HEK293 (cell line): ENCODE measurements at regions of chr10 and their contacts with region 1.

Region 1: DNA sequence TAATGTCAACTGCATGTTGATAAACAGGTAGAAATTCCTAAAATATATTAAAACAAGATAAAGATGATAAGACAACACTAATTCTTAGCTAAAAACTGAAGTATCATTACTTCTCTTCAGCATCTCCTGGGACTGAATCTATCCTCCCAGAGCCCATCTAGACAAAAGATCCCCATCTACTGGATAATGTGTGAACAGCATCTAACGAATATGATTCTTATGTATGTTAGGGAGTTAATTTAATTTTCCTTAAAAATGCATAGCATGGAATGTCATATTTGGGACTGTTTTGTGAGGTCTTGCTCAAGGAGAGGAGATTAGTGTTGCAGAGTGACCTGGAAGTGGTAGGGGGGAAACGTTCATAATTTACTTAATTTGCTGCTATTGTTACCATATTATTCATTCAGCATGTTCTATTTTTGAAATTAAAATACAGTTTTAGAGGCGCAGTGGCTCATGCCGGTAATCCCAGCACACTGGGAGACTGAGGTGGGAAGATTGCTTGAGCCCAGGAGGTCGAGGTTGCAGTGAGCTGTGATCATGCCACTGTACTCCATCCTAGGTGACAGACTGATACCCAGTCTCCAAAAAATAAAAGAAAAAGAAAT is 305.1 kb upstream of the CSTF2T start:
- H3K4me3 ChIP-seq: no peak overlapping the region
- H3K27ac ChIP-seq: no peak overlapping the region
- H3K4me1 ChIP-seq: no peaks in the 10 kb centered on the region
- CTCF ChIP-seq: 0 out of 2 replicates have a peak, but pooled peaks have one; percentile 25

Region 2: GRCh38 chr10:51993475-51993874 is 11.0 kb before region 1 on chr10:
- CTCF ChIA-PET with region 1: interaction called, 15 read pairs
- POLR2A ChIA-PET with region 1: no interaction called
- H3K4me3 ChIP-seq: no peak overlapping the region
- H3K27ac ChIP-seq: no peak overlapping the region
- H3K4me1 ChIP-seq: no peaks in the 10 kb centered on the region
- CTCF ChIP-seq: no peak

Region 3: DNA sequence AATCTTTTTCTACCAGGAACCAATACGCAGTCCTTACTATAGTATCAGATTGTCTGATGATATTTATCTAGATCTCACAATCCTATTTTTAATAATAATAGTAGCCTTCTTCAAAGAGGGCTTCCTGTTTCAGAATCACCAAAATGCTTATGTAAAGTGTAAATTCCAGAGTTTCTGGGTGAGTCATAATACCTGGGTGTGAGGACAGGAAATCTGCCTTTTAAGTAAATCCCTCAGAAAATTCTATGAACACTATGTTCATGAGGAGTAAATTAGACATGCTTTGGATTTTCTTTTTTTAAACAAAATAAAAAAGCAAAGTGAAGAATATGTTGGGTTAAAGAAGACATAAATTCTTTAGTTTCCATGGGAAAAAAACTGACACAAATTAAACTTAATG is 330.1 kb after region 1 on chr10:
- CTCF ChIA-PET with region 1: no interaction called
- POLR2A ChIA-PET with region 1: no interaction called
- H3K4me3 ChIP-seq: no peak overlapping the region
- H3K27ac ChIP-seq: no peak overlapping the region
- H3K4me1 ChIP-seq: no peaks in the 10 kb centered on the region
- CTCF ChIP-seq: no peak